ENCODE measurements at regions of chr11 and their contacts with region 1.

Region 1: GRCh38 chr11:72091005-72091691 is 10.5 kb downstream of the LRRC51 start:
- DNase-seq: peak; percentile 57 to 80 (median 66)
- H3K4me3 ChIP-seq: no peak overlapping the region
- H3K4me3 Mint-ChIP-seq: no peak overlapping the region
- H3K27ac ChIP-seq: no peak overlapping the region
- H3K27ac Mint-ChIP-seq: peak overlapping the region; percentile 10 to 91 (median 81)
- H3K4me1 ChIP-seq: no peaks in the 10 kb centered on the region
- H3K4me1 Mint-ChIP-seq: peaks cover 4 to 11% (median 9%) of the 10 kb centered on the region in 4 donors
- H3K27me3 ChIP-seq: no peaks in the 10 kb centered on the region
- H3K27me3 Mint-ChIP-seq: no peaks in the 10 kb centered on the region

Region 2: DNA sequence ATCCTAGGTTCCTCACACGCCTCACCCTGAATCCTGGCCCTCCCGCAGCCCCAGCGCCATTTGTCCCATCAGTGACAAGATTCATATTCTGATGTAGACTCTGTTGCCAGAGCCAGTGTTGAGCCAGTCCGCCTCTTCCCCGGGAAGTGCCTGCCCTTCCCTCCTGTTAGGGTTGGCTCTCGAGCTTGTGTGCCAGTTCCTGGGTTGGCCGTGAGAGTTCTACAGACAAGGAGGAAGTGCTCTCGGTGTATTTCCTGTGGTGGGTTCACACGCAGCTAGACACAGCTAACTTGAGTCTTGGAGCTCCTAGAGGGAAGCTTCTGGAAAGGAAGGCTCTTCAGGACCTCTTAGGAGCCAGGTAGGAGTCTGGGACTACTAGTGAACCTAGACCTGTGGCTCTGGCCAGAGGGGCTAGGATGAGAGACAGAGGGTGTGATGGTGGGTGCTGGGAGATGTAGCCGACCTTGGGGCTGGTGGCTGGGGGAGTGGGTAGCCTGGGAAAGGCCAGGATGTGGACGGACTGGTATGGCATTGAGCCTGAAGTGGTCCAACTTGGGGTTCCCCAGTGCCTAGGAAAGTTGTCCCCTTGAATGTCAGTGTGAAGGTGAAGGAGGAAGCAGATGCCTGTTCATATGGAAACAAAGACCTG is 92.4 kb before region 1 on chr11 and contains the start of gene IL18BP:
- CTCF ChIA-PET with region 1: interaction called, 11 read pairs
- POLR2A ChIA-PET with region 1: no interaction called
- intact Hi-C with region 1: no loop called
- DNase-seq: peak; percentile 31 to 50 (median 46)
- H3K4me3 ChIP-seq: peak within 1 kb of the TSS; percentile 46 to 62
- H3K4me3 Mint-ChIP-seq: peak within 1 kb of the TSS; percentile 85 to 98 (median 92)
- H3K27ac ChIP-seq: peak within 1 kb of the TSS; percentile 65
- H3K27ac Mint-ChIP-seq: peak within 1 kb of the TSS; percentile 83 to 98 (median 97)
- H3K4me1 ChIP-seq: peaks cover 26% of the 10 kb centered on the region
- H3K4me1 Mint-ChIP-seq: peaks cover 19 to 40% (median 31%) of the 10 kb centered on the region in 4 donors
- H3K27me3 ChIP-seq: no peaks in the 10 kb centered on the region
- H3K27me3 Mint-ChIP-seq: no peaks in the 10 kb centered on the region
- total RNA-seq, gene IL18BP: 21.4 to 26.2 TPM

Region 3: GRCh38 chr11:72015511-72016171 is 75.5 kb before region 1 on chr11:
- CTCF ChIA-PET with region 1: interaction called, 352 read pairs
- POLR2A ChIA-PET with region 1: interaction called, 4 read pairs
- intact Hi-C with region 1: no loop called
- DNase-seq: no peak
- H3K4me3 ChIP-seq: no peak overlapping the region
- H3K4me3 Mint-ChIP-seq: no peak overlapping the region
- H3K27ac ChIP-seq: no peak overlapping the region
- H3K27ac Mint-ChIP-seq: peak overlapping the region in 2 of 7 donors; percentile 53 to 65
- H3K4me1 ChIP-seq: no peaks in the 10 kb centered on the region
- H3K4me1 Mint-ChIP-seq: peaks cover 0 to 4% (median 2%) of the 10 kb centered on the region in 4 donors
- H3K27me3 ChIP-seq: no peaks in the 10 kb centered on the region
- H3K27me3 Mint-ChIP-seq: no peaks in the 10 kb centered on the region

Measured in CD4-positive, alpha-beta memory T cell (primary cell).